GM10248 (cell line): ENCODE measurements at regions of chrX and their contacts with region 1.

Region 1: DNA sequence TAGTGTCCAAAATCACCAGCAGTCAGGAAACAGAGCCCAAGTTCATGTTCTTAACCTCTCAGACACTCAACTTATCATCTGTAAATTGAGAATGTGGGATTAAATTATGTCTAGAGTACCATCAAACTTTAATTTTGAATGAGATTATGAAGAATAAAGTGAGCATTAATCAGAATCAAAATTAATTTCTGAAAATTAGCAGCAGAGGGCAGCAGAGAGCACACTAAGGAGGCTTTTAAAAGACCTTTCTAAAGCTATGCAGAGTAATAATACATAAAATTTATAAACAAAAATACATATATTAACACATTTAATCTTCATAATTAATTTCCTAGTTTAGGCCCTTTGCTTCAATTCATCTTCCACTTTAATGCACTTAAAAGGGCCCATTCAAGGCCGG is 7.1 kb downstream of the TASL start:
- DNase-seq: no peak
- CTCF ChIP-seq: peak; percentile 30

Region 2: GRCh38 chrX:30308263-30309138 is 262.0 kb before region 1 on chrX:
- CTCF ChIA-PET with region 1: no interaction called
- POLR2A ChIA-PET with region 1: no interaction called
- DNase-seq: peak; percentile 7
- CTCF ChIP-seq: no peak

Region 3: DNA sequence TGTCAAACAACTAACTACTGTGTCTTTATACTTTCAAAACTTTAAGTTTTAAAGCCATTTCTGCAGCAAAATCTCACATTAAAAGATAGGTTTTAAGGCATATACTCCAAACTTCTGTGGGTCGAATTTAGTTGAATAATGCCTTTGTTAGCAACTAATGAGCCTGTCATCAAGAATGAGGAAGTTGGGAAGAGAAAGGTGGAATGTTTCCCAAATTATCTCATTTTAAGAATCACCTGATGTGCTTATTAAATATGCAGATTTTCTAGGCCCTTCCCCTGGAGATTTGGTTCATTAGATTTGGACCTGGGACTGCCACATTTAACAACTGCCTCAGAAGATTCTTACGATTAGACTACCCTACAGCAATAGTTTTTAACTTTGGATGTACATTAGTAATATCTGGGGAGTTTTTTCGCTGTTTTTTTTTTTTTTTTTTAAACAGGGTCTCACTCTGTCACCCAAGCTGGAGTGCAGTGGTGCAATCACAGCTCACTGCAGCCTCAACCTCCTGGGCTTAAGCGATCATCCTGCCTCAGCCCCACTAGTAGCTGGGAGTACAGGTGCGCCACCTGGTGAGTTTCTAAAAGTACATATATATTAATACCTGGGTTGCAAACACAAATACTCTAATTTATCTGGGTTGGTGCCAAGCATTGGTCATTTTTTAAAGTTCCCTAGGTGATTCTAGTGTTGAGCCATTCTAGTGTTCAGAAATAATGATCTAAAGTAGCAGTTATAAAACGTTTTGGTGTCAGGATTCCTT is 23.1 kb after region 1 on chrX:
- CTCF ChIA-PET with region 1: interaction called, 24 read pairs
- POLR2A ChIA-PET with region 1: no interaction called
- DNase-seq: no peak
- CTCF ChIP-seq: peak; percentile 5

Region 4: DNA sequence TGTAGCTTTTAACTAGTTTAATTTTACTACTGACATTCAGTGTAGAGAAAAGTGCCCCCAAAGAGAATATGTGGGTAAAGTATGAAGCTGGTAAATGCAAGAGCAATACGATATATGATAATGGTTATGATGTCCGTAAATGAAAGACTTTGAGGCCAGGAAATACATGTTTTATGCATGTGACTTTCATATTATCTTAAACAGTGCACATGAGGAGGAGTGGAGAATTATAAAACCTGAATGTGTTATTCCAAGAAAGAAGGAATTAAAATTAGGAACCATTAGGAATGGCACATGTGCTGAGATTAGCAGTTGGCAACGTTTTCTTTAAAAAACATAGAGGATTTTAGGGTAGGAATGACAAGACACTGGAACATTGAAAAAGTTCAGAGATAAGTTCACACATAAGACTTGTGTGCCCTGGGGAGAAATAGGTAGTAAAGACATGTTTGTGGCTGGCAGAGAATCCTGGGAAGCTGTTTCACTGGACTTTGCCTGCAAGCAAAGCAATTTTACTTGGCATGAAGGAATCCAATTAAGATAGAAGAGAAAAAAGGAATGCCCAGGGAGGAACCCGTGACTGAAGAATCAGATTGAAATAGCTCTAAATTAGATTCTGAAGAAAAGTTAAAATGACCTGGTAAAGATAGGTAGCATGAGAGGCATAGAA is 102.8 kb after region 1 on chrX:
- CTCF ChIA-PET with region 1: no interaction called
- POLR2A ChIA-PET with region 1: no interaction called
- DNase-seq: no peak
- CTCF ChIP-seq: no peak